ENCODE measurements at regions of chr10 and their contacts with region 1.

Region 1: GRCh38 chr10:9342885-9343570 is 1288.5 kb downstream of the GATA3 start:
- DNase-seq: peak; percentile 48
- H3K4me3 ChIP-seq: no peak overlapping the region
- H3K27ac ChIP-seq: no peak overlapping the region
- H3K4me1 ChIP-seq: no peaks in the 10 kb centered on the region
- H3K27me3 ChIP-seq: no peaks in the 10 kb centered on the region
- CTCF ChIP-seq: peak; percentile 75

Region 2: GRCh38 chr10:10677479-10677878 is 1334.5 kb after region 1 on chr10:
- CTCF ChIA-PET with region 1: interaction called, 3 read pairs
- POLR2A ChIA-PET with region 1: no interaction called
- intact Hi-C with region 1: loop called (anchors 1 kb)
- DNase-seq: peak; percentile 44
- H3K4me3 ChIP-seq: no peak overlapping the region
- H3K27ac ChIP-seq: no peak overlapping the region
- H3K4me1 ChIP-seq: no peaks in the 10 kb centered on the region
- H3K27me3 ChIP-seq: peaks cover 7% of the 10 kb centered on the region
- CTCF ChIP-seq: peak; percentile 38

Region 3: DNA sequence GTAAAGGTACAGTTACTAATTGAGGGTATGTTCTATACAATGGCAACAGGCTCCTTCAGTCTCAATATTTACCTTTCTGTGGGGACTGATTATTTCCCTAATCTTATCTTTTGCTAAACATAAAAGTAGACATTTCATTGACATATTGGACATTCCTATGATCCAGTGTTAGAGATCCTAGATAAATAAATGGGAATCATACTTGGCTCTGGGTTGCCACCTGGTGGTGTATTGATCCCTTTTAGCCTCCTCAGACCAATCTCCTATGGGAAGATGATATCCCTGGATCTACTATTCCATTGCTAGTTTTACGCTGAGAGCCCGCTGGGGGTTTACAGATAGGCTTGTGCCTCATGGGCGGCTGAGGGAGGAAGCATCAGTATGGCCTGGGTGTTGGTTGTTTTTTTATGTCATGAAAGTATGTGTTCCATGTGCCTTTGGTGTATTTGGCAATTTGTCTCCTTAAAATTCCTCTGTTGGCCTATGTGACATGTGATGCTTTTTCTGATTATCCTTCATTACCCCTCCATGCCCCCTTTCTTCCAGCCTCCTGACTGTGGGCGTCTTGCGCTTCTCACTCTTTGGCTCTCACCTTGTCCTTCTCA is 1693.5 kb after region 1 on chr10:
- CTCF ChIA-PET with region 1: interaction called, 6 read pairs
- POLR2A ChIA-PET with region 1: no interaction called
- intact Hi-C with region 1: loop called (anchors 2 kb)
- DNase-seq: peak; percentile 52
- H3K4me3 ChIP-seq: no peak overlapping the region
- H3K27ac ChIP-seq: no peak overlapping the region
- H3K4me1 ChIP-seq: no peaks in the 10 kb centered on the region
- H3K27me3 ChIP-seq: peaks cover 34% of the 10 kb centered on the region
- CTCF ChIP-seq: peak; percentile 65

Region 4: GRCh38 chr10:11270135-11270857 is 1927.3 kb after region 1 on chr10:
- CTCF ChIA-PET with region 1: interaction called, 12 read pairs
- POLR2A ChIA-PET with region 1: no interaction called
- intact Hi-C with region 1: loop called (anchors 1 kb)
- DNase-seq: peak; percentile 69
- H3K4me3 ChIP-seq: no peak overlapping the region
- H3K27ac ChIP-seq: no peak overlapping the region
- H3K4me1 ChIP-seq: no peaks in the 10 kb centered on the region
- H3K27me3 ChIP-seq: peaks cover 56% of the 10 kb centered on the region
- CTCF ChIP-seq: peak; percentile 95

Measured in A673 (cell line).